Heart right ventricle (tissue), 16 donors: ENCODE measurements at regions of chr12 and their contacts with region 1.

Region 1: DNA sequence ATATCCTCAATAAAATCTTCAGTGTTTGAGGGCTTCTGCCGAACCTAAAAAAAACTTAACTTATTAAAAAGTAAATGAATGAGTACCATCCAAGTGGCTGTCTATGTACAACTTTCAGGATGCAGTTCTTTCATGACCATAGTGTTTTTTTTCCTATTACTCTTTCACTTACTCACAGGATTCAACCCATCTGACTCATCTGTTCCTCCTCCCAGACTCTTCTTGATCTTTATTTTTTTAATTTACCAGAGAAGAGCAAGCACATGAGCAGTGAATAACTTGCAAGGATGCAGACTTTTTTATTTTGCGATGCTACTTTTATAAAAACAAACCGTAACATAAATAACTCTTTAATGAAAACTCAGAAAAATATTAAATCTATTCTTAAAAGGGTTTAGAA is 24.5 kb downstream of the RECQL start:
- DNase-seq: no peak
- ATAC-seq: no peak
- H3K4me3 ChIP-seq: no peak overlapping the region
- H3K27ac ChIP-seq: no peak overlapping the region
- H3K4me1 ChIP-seq: no peaks in the 10 kb centered on the region
- H3K27me3 ChIP-seq: no peaks in the 10 kb centered on the region
- CTCF ChIP-seq: no peak

Region 2: DNA sequence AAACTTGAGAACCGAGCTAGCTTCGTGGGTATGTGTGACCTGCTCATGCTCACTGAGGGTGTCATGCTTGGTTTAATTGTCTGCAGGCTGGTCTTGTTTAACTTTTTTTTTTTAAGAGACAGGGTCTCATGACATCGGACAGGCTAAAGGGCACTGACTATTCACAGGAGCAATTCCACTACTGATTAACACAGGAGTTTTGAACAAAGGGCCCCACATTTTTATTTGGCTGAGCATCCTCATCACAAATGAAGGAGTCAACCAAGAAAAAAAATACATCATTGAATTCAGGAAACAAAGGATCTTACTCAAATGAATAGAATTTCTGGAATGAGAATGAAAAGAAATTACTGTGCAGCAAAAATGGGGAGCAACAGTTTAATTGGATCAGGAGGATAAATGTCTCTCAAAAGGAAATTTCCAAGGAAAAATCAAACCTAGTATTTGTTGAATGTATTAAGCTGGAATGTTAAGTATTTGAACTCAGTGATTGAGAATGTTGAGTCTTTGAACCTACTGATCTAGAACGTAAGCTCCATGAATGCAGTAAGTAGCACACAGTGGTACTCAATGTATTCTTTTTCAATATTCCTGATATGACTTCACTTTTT is 60.3 kb before region 1 on chr12:
- intact Hi-C with region 1: no loop called
- DNase-seq: no peak
- ATAC-seq: no peak
- H3K4me3 ChIP-seq: no peak overlapping the region
- H3K27ac ChIP-seq: no peak overlapping the region
- H3K4me1 ChIP-seq: no peaks in the 10 kb centered on the region
- H3K27me3 ChIP-seq: peaks cover 0 to 14% (median 4%) of the 10 kb centered on the region in 7 donors
- CTCF ChIP-seq: no peak

Region 3: GRCh38 chr12:21849878-21850277 is 372.9 kb after region 1 on chr12:
- intact Hi-C with region 1: loop called in 1 of 10 experiments (anchors 5 kb)
- DNase-seq: peak in 1 of 2 donors; percentile 12
- ATAC-seq: peak in 5 of 8 donors; percentile 37 to 78 (median 61)
- H3K4me3 ChIP-seq: no peak overlapping the region
- H3K27ac ChIP-seq: peak overlapping the region in 1 of 10 donors; percentile 45
- H3K4me1 ChIP-seq: peaks cover 0 to 17% (median 6%) of the 10 kb centered on the region in 9 donors
- H3K27me3 ChIP-seq: no peaks in the 10 kb centered on the region
- CTCF ChIP-seq: no peak

Region 4: DNA sequence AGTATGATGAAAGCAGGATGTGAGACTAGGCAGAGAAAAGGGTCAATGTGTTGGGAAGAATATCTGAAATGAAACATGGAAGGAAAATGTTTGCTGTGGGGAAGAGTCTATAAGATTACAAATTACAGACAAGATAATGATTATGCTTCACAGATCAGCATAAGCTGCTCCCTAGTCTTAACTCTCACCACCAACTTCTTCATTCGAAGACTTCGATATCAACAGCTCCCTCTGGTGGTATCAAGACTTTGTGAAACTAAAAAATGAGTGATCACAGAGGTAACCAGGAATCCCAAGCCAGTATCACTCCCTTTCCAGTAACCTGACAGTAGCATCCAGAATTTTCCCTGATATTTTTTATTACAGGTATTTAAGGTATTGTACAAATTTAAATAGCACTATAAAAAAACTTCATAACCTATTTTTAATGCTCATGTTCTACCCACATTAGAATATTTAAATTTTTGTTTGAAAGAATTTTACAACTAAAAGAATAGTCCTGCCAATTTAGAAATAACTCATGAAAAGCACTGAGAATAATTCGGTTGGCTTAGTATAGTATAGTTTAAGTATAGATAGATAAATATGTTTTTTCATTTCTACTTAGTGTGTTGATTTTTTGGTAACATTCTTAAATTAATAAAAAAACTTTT is 983.0 kb after region 1 on chr12:
- intact Hi-C with region 1: loop called in 1 of 10 experiments (anchors 10 kb)
- DNase-seq: no peak
- ATAC-seq: peak in 2 of 8 donors; percentile 24 to 37
- H3K4me3 ChIP-seq: no peak overlapping the region
- H3K27ac ChIP-seq: no peak overlapping the region
- H3K4me1 ChIP-seq: no peaks in the 10 kb centered on the region
- H3K27me3 ChIP-seq: no peaks in the 10 kb centered on the region
- CTCF ChIP-seq: peak in 8 of 9 donors; percentile 35 to 74 (median 63)